Mammary epithelial cell (primary cell): ENCODE measurements at regions of chr3 and their contacts with region 1.

Region 1: GRCh38 chr3:176939022-176939817 is 258.1 kb downstream of the TBL1XR1 start:
- DNase-seq: peak; percentile 60
- H3K4me3 ChIP-seq: no peak overlapping the region
- H3K27ac ChIP-seq: no peak overlapping the region
- H3K4me1 ChIP-seq: no peaks in the 10 kb centered on the region
- H3K27me3 ChIP-seq: no peaks in the 10 kb centered on the region
- CTCF ChIP-seq: peak; percentile 84 to 88

Region 2: GRCh38 chr3:176514297-176514696 is 424.9 kb before region 1 on chr3:
- CTCF ChIA-PET with region 1: interaction called, 10 read pairs
- dilution Hi-C with region 1: no loop called
- in situ Hi-C with region 1: loop called in 1 of 2 experiments (anchors 25 kb)
- intact Hi-C with region 1: loop called (anchors 1 kb)
- DNase-seq: peak; percentile 32
- H3K4me3 ChIP-seq: no peak overlapping the region
- H3K27ac ChIP-seq: no peak overlapping the region
- H3K4me1 ChIP-seq: no peaks in the 10 kb centered on the region
- H3K27me3 ChIP-seq: no peaks in the 10 kb centered on the region
- CTCF ChIP-seq: peak; percentile 27 to 71

Region 3: GRCh38 chr3:176734146-176734545 is 205.1 kb before region 1 on chr3:
- CTCF ChIA-PET with region 1: no interaction called
- dilution Hi-C with region 1: no loop called
- in situ Hi-C with region 1: no loop called
- intact Hi-C with region 1: loop called (anchors 2 kb)
- DNase-seq: no peak
- H3K4me3 ChIP-seq: no peak overlapping the region
- H3K27ac ChIP-seq: no peak overlapping the region
- H3K4me1 ChIP-seq: no peaks in the 10 kb centered on the region
- H3K27me3 ChIP-seq: no peaks in the 10 kb centered on the region
- CTCF ChIP-seq: peak in 1 of 2 donors; percentile 12

Region 4: DNA sequence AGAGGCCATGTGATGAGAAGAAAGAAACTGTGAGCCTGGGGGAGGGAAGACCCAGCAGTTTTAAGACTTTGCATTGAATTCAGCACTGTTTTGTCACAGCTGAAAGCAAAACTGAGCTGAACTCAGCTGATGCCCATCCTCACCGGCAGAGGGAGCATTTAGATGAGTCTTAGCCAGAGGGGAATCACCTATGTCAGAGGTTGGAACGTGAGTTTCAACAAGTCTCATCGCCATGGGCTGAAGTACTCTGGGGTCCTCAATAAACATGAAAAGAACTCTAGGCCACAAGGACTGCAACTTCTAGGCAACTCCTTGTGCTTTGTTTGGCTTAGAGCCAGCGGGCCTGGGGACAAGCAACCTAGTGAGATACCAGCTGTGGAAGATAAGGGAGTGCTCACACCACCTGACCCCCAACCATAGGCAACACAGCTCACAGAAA is 66.4 kb before region 1 on chr3:
- CTCF ChIA-PET with region 1: interaction called, 4 read pairs
- dilution Hi-C with region 1: no loop called
- in situ Hi-C with region 1: no loop called
- intact Hi-C with region 1: loop called (anchors 1 kb)
- DNase-seq: peak; percentile 40
- H3K4me3 ChIP-seq: no peak overlapping the region
- H3K27ac ChIP-seq: no peak overlapping the region
- H3K4me1 ChIP-seq: no peaks in the 10 kb centered on the region
- H3K27me3 ChIP-seq: no peaks in the 10 kb centered on the region
- CTCF ChIP-seq: peak; percentile 88 to 90

Region 5: GRCh38 chr3:176978441-176978840 is 39.2 kb after region 1 on chr3:
- CTCF ChIA-PET with region 1: no interaction called
- dilution Hi-C with region 1: no loop called
- in situ Hi-C with region 1: no loop called
- intact Hi-C with region 1: no loop called
- DNase-seq: peak; percentile 37
- H3K4me3 ChIP-seq: no peak overlapping the region
- H3K27ac ChIP-seq: peak overlapping the region; percentile 5
- H3K4me1 ChIP-seq: peaks cover 9% of the 10 kb centered on the region
- H3K27me3 ChIP-seq: no peaks in the 10 kb centered on the region
- CTCF ChIP-seq: no peak

Region 6: GRCh38 chr3:178385280-178385952 is 1446.2 kb after region 1 on chr3:
- CTCF ChIA-PET with region 1: no interaction called
- dilution Hi-C with region 1: no loop called
- in situ Hi-C with region 1: no loop called
- intact Hi-C with region 1: loop called (anchors 1 kb)
- DNase-seq: peak; percentile 29
- H3K4me3 ChIP-seq: no peak overlapping the region
- H3K27ac ChIP-seq: no peak overlapping the region
- H3K4me1 ChIP-seq: peaks cover 8% of the 10 kb centered on the region
- H3K27me3 ChIP-seq: no peaks in the 10 kb centered on the region
- CTCF ChIP-seq: peak; percentile 77 to 95